T-cell (primary cell): ENCODE measurements at regions of chr12 and their contacts with region 1.

Region 1: DNA sequence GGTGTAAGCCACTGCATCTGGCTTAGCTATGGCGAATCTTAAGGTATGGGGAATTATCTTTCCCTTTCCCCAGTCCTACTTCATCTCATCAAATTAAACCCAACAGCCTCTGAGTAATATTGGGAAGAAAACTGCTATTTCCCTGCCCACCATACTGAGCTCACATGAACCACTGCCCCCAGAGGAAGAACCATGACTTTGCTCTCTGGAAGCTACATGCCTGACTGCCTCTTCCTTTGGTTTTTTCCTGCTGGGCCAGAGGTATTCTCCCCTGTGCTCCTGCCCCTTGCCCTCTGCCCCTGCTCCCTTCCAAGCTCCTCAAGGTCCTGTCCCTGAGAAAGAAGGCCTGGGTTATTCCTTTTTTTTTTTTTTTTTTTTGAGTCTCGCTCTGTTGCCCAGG is 15.2 kb downstream of the RILPL2 start:
- DNase-seq: no peak
- ATAC-seq: no peak
- H3K4me3 ChIP-seq: no peak overlapping the region
- H3K4me3 Mint-ChIP-seq: no peak overlapping the region
- H3K27ac ChIP-seq: no peak overlapping the region
- H3K27ac Mint-ChIP-seq: no peak overlapping the region
- H3K4me1 ChIP-seq: no peaks in the 10 kb centered on the region
- H3K4me1 Mint-ChIP-seq: peaks cover 0 to 6% (median 0%) of the 10 kb centered on the region in 3 donors
- H3K27me3 ChIP-seq: no peaks in the 10 kb centered on the region
- H3K27me3 Mint-ChIP-seq: no peaks in the 10 kb centered on the region

Region 2: GRCh38 chr12:123478069-123478468 is 56.8 kb after region 1 on chr12:
- CTCF ChIA-PET with region 1: no interaction called
- POLR2A ChIA-PET with region 1: interaction called in 1 of 2 experiments, 10 read pairs
- DNase-seq: no peak
- ATAC-seq: no peak
- H3K4me3 ChIP-seq: no peak overlapping the region
- H3K4me3 Mint-ChIP-seq: no peak overlapping the region
- H3K27ac ChIP-seq: no peak overlapping the region
- H3K27ac Mint-ChIP-seq: peak overlapping the region in 1 of 2 donors; percentile 87
- H3K4me1 ChIP-seq: peaks cover 4 to 17% of the 10 kb centered on the region in 2 experiments
- H3K4me1 Mint-ChIP-seq: peaks cover 37 to 50% (median 40%) of the 10 kb centered on the region in 3 donors
- H3K27me3 ChIP-seq: no peaks in the 10 kb centered on the region
- H3K27me3 Mint-ChIP-seq: no peaks in the 10 kb centered on the region